Activated CD4-positive, alpha-beta T cell treated with anti-CD3 and anti-CD28 coated beads, Interleukin-2, amount 10 ng/mL, durations not matched to agents 7 days and 5 days (primary cell): ENCODE measurements at regions of chr19 and their contacts with region 1.

Region 1: DNA sequence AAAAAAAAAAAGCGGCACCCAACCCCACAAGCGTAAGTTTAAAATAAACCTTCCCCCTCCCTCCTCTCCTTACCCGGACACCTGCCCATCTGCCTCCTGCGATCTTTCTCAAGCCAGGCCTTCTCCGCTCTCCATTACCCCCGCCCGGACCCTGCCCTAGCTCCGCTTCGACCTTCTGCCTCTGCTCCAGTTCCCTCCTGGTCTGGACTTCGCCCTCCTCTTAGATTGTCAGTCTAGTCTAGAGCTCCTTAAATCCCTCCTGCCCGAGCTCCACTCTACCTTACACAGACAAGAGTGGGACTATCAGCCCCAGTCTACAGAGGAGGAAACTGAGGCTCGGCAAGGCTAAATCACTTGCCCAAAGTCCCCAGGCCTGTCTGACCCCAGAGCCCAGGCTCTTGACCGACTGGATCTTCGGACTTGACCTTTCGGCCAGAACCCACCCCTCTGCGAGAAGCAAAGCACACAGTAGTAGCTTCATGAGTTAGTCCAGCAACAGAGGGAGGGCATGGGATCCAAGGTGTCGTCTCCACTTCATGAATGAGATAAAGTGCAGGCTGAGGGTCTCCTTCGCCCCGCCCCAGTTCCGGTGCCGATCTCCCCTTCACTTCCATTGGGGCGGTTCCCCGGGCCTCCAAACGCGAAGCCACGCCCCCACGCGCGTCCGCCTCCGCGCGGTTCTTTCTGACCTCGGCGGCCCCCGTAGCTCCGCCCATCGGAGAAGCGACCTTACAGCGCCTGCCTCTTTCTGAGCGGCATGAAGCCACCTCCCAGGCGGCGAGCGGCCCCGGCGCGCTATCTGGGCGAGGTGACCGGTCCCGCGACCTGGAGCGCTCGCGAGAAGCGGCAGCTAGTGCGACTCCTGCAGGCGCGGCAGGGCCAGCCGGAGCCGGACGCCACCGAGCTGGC is at the start of gene SNAPC2:
- DNase-seq: peak; percentile 97
- H3K4me3 Mint-ChIP-seq: peak within 1 kb of the TSS; percentile 87
- H3K27ac Mint-ChIP-seq: peak within 1 kb of the TSS; percentile 94
- H3K4me1 Mint-ChIP-seq: peaks cover 38% of the 10 kb centered on the region
- H3K27me3 Mint-ChIP-seq: peaks cover 35% of the 10 kb centered on the region
- total RNA-seq, gene SNAPC2: 18.6 to 19.1 TPM

Region 2: DNA sequence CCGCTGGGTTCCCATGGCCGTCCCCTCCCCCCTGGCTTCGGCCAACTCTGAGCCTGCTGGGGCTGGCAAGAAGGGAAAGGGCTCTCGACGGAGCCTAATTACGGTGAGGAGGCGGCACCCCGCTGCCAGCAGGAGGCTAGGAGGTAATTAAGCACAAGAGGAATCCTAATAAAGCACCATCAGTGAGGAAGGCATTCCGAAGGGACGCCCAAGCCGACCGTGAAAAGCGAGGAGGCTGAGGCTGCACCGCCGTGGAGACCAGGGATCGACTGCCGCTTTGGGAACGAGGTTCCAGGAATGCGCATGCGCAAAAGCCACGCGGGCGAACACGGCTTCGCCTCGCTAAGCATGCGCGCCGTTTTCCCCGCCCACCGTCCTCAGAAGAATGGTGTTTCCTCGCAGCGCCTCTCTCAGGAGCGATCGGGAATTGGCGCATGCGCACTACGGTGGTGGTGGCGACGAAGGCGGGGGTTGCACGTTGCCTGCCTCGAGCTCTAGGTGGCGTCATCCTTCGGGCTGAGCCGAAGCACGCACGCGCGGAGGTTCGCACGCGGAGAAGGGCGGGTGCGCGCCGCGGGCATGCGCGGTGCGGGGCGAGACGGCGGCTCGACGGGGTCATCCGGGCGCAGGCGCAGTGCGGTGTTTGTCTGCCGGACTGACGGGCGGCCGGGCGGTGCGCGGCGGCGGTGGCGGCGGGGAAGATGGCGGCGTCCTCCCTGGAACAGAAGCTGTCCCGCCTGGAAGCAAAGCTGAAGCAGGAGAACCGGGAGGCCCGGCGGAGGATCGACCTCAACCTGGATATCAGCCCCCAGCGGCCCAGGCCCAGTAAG is 16.4 kb before region 1 on chr19 and contains the start of gene MAP2K7:
- CTCF ChIA-PET with region 1: interaction called, 19 read pairs
- POLR2A ChIA-PET with region 1: no interaction called
- DNase-seq: peak; percentile 100
- H3K4me3 Mint-ChIP-seq: peak within 1 kb of the TSS; percentile 81
- H3K27ac Mint-ChIP-seq: peak within 1 kb of the TSS; percentile 94
- H3K4me1 Mint-ChIP-seq: peaks cover 29% of the 10 kb centered on the region
- H3K27me3 Mint-ChIP-seq: no peaks in the 10 kb centered on the region
- total RNA-seq, gene MAP2K7: 44.1 to 45.6 TPM

Region 3: GRCh38 chr19:7908742-7909461 is 11.0 kb before region 1 on chr19:
- CTCF ChIA-PET with region 1: interaction called, 19 read pairs
- POLR2A ChIA-PET with region 1: no interaction called
- DNase-seq: no peak
- H3K4me3 Mint-ChIP-seq: no peak overlapping the region
- H3K27ac Mint-ChIP-seq: no peak overlapping the region
- H3K4me1 Mint-ChIP-seq: peaks cover 21% of the 10 kb centered on the region
- H3K27me3 Mint-ChIP-seq: no peaks in the 10 kb centered on the region

Region 4: GRCh38 chr19:7953060-7953459 is 33.2 kb after region 1 on chr19:
- CTCF ChIA-PET with region 1: no interaction called
- POLR2A ChIA-PET with region 1: no interaction called
- DNase-seq: no peak
- H3K4me3 Mint-ChIP-seq: no peak overlapping the region
- H3K27ac Mint-ChIP-seq: no peak overlapping the region
- H3K4me1 Mint-ChIP-seq: no peaks in the 10 kb centered on the region
- H3K27me3 Mint-ChIP-seq: no peaks in the 10 kb centered on the region